B cell (primary cell): ENCODE measurements at regions of chr3 and their contacts with region 1.

Region 1: GRCh38 chr3:128725932-128726690 is at the start of gene RAB7A:
- DNase-seq: peak; percentile 99
- ATAC-seq: peak; percentile 96
- H3K4me3 ChIP-seq: peak within 1 kb of the TSS; percentile 79 to 98 (median 93)
- H3K4me3 Mint-ChIP-seq: peak within 1 kb of the TSS; percentile 99
- H3K27ac ChIP-seq: peak within 1 kb of the TSS; percentile 92 to 99
- H3K27ac Mint-ChIP-seq: peak within 1 kb of the TSS; percentile 100
- H3K4me1 ChIP-seq: peaks cover 45 to 46% of the 10 kb centered on the region in 2 donors
- H3K4me1 Mint-ChIP-seq: peaks cover 52% of the 10 kb centered on the region
- H3K27me3 ChIP-seq: no peaks in the 10 kb centered on the region
- H3K27me3 Mint-ChIP-seq: peaks cover 7% of the 10 kb centered on the region
- CTCF ChIP-seq: no peak
- total RNA-seq, gene RAB7A: 138 and 144 TPM in 2 replicates

Region 2: DNA sequence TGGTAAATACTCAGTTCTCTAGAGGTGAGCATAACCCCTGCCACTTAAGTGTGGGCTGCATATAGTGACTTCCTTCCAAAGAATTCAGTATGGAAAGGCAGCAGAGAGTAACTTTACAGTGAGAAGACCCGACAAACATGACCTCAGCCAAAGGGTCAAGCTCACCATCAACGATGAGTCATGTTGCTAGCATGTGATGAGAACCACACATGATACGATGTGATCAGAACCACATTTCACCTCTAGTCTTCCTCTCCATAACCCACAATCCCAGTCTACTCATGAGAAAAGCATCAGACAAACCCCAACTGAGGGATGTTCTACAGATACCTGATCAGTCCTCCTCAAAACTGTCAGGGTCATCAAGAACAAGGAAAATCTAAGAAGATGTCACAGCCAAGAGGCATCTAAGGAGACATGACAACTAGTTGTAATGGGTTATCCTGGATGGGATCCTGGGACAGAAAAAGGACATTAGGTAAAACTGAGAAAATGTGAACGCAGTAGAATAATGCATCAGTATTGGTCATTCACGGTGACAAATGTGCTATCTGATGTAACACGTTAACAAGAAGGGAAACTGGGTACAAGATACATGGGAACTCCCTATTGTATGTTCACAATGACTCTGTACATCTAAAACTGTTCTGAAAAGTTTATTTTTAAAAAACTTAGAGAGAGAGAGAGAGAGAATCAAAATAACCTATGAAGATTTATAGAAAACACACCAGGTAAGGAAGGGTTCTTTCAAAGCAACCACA is 645.6 kb before region 1 on chr3:
- CTCF ChIA-PET with region 1: no interaction called
- POLR2A ChIA-PET with region 1: no interaction called
- intact Hi-C with region 1: no loop called
- DNase-seq: no peak
- ATAC-seq: no peak
- H3K4me3 ChIP-seq: no peak overlapping the region
- H3K4me3 Mint-ChIP-seq: no peak overlapping the region
- H3K27ac ChIP-seq: no peak overlapping the region
- H3K27ac Mint-ChIP-seq: no peak overlapping the region
- H3K4me1 ChIP-seq: peaks cover 13 to 20% of the 10 kb centered on the region in 2 donors
- H3K4me1 Mint-ChIP-seq: peaks cover 10% of the 10 kb centered on the region
- H3K27me3 ChIP-seq: peaks cover 0 to 8% (median 1%) of the 10 kb centered on the region in 4 experiments
- H3K27me3 Mint-ChIP-seq: no peaks in the 10 kb centered on the region
- CTCF ChIP-seq: no peak

Region 3: GRCh38 chr3:128650096-128651050 is 75.7 kb before region 1 on chr3 and contains the start of gene RPN1:
- CTCF ChIA-PET with region 1: no interaction called
- POLR2A ChIA-PET with region 1: interaction called, 7 read pairs
- intact Hi-C with region 1: loop called (anchors 1 kb)
- DNase-seq: peak; percentile 96
- ATAC-seq: peak; percentile 97
- H3K4me3 ChIP-seq: peak within 1 kb of the TSS; percentile 74 to 100 (median 90)
- H3K4me3 Mint-ChIP-seq: peak within 1 kb of the TSS; percentile 89
- H3K27ac ChIP-seq: peak within 1 kb of the TSS; percentile 89 to 98
- H3K27ac Mint-ChIP-seq: peak within 1 kb of the TSS; percentile 91
- H3K4me1 ChIP-seq: peaks cover 15 to 25% of the 10 kb centered on the region in 2 donors
- H3K4me1 Mint-ChIP-seq: peaks cover 31% of the 10 kb centered on the region
- H3K27me3 ChIP-seq: no peaks in the 10 kb centered on the region
- H3K27me3 Mint-ChIP-seq: no peaks in the 10 kb centered on the region
- CTCF ChIP-seq: no peak
- total RNA-seq, gene RPN1: 80.6 and 83.2 TPM in 2 replicates

Region 4: GRCh38 chr3:128787256-128788240 is 61.4 kb after region 1 on chr3:
- CTCF ChIA-PET with region 1: no interaction called
- POLR2A ChIA-PET with region 1: no interaction called
- intact Hi-C with region 1: loop called (anchors 2 kb)
- DNase-seq: peak; percentile 68
- ATAC-seq: peak; percentile 80
- H3K4me3 ChIP-seq: no peak overlapping the region
- H3K4me3 Mint-ChIP-seq: peak overlapping the region; percentile 21
- H3K27ac ChIP-seq: peak overlapping the region; percentile 4 to 60
- H3K27ac Mint-ChIP-seq: peak overlapping the region; percentile 85
- H3K4me1 ChIP-seq: peaks cover 60% of the 10 kb centered on the region in 2 donors
- H3K4me1 Mint-ChIP-seq: peaks cover 88% of the 10 kb centered on the region
- H3K27me3 ChIP-seq: no peaks in the 10 kb centered on the region
- H3K27me3 Mint-ChIP-seq: no peaks in the 10 kb centered on the region
- CTCF ChIP-seq: peak; percentile 74

Region 5: GRCh38 chr3:128794770-128795649 is 68.9 kb after region 1 on chr3:
- CTCF ChIA-PET with region 1: interaction called, 6 read pairs
- POLR2A ChIA-PET with region 1: no interaction called
- intact Hi-C with region 1: loop called (anchors 2 kb)
- DNase-seq: peak; percentile 81
- ATAC-seq: peak; percentile 99
- H3K4me3 ChIP-seq: no peak overlapping the region
- H3K4me3 Mint-ChIP-seq: no peak overlapping the region
- H3K27ac ChIP-seq: no peak overlapping the region
- H3K27ac Mint-ChIP-seq: peak overlapping the region; percentile 32
- H3K4me1 ChIP-seq: peaks cover 17 to 22% of the 10 kb centered on the region in 2 donors
- H3K4me1 Mint-ChIP-seq: peaks cover 49% of the 10 kb centered on the region
- H3K27me3 ChIP-seq: no peaks in the 10 kb centered on the region
- H3K27me3 Mint-ChIP-seq: no peaks in the 10 kb centered on the region
- CTCF ChIP-seq: peak; percentile 80

Region 6: GRCh38 chr3:128879125-128879969 is 153.2 kb after region 1 on chr3 and contains the start of gene ACAD9:
- CTCF ChIA-PET with region 1: no interaction called
- POLR2A ChIA-PET with region 1: interaction called, 3 read pairs
- intact Hi-C with region 1: loop called (anchors 1 kb)
- DNase-seq: peak; percentile 97
- ATAC-seq: peak; percentile 96
- H3K4me3 ChIP-seq: peak within 1 kb of the TSS; percentile 86 to 97 (median 88)
- H3K4me3 Mint-ChIP-seq: peak within 1 kb of the TSS; percentile 95
- H3K27ac ChIP-seq: peak within 1 kb of the TSS; percentile 93 to 98
- H3K27ac Mint-ChIP-seq: peak within 1 kb of the TSS; percentile 95
- H3K4me1 ChIP-seq: peaks cover 24 to 31% of the 10 kb centered on the region in 2 donors
- H3K4me1 Mint-ChIP-seq: peaks cover 55% of the 10 kb centered on the region
- H3K27me3 ChIP-seq: no peaks in the 10 kb centered on the region
- H3K27me3 Mint-ChIP-seq: no peaks in the 10 kb centered on the region
- CTCF ChIP-seq: no peak
- total RNA-seq, gene ACAD9: 57.6 and 71.8 TPM in 2 replicates

Region 7: GRCh38 chr3:129233538-129233937 is 507.4 kb after region 1 on chr3:
- CTCF ChIA-PET with region 1: no interaction called
- POLR2A ChIA-PET with region 1: interaction called, 4 read pairs
- intact Hi-C with region 1: loop called (anchors 5 kb)
- DNase-seq: peak; percentile 95
- ATAC-seq: peak; percentile 94
- H3K4me3 ChIP-seq: no peak overlapping the region
- H3K4me3 Mint-ChIP-seq: peak overlapping the region; percentile 50
- H3K27ac ChIP-seq: peak overlapping the region; percentile 71 to 87
- H3K27ac Mint-ChIP-seq: peak overlapping the region; percentile 97
- H3K4me1 ChIP-seq: peaks cover 28 to 36% of the 10 kb centered on the region in 2 donors
- H3K4me1 Mint-ChIP-seq: peaks cover 47% of the 10 kb centered on the region
- H3K27me3 ChIP-seq: no peaks in the 10 kb centered on the region
- H3K27me3 Mint-ChIP-seq: no peaks in the 10 kb centered on the region
- CTCF ChIP-seq: no peak